Motor neuron (in vitro differentiated cells): ENCODE measurements at regions of chr20 and their contacts with region 1.

Region 1: GRCh38 chr20:48620519-48621254 is 207.1 kb downstream of the PREX1 start:
- ATAC-seq: peak; percentile 80 to 96 (median 94)
- H3K4me3 ChIP-seq: peak overlapping the region in 3 of 5 donors; percentile 1 to 8 (median 8)
- H3K27ac ChIP-seq: no peak overlapping the region
- H3K4me1 ChIP-seq: peaks cover 4 to 9% of the 10 kb centered on the region in 2 donors

Region 2: GRCh38 chr20:47672166-47672565 is 948.5 kb before region 1 on chr20:
- in situ Hi-C with region 1: loop called in 8 of 9 experiments (anchors 5 to 25 kb)
- ATAC-seq: no peak
- H3K4me3 ChIP-seq: no peak overlapping the region
- H3K27ac ChIP-seq: no peak overlapping the region
- H3K4me1 ChIP-seq: no peaks in the 10 kb centered on the region

Region 3: GRCh38 chr20:47785854-47786764 is 834.6 kb before region 1 on chr20:
- in situ Hi-C with region 1: loop called in 7 of 9 experiments (anchors 10 to 25 kb)
- ATAC-seq: peak; percentile 48 to 79 (median 74)
- H3K4me3 ChIP-seq: peak overlapping the region; percentile 45 to 84 (median 56)
- H3K27ac ChIP-seq: peak overlapping the region; percentile 90
- H3K4me1 ChIP-seq: peaks cover 39 to 48% of the 10 kb centered on the region in 2 donors

Region 4: GRCh38 chr20:48012197-48013085 is 608.2 kb before region 1 on chr20:
- in situ Hi-C with region 1: no loop called
- ATAC-seq: peak in 3 of 8 experiments; percentile 23 to 47 (median 46)
- H3K4me3 ChIP-seq: no peak overlapping the region
- H3K27ac ChIP-seq: no peak overlapping the region
- H3K4me1 ChIP-seq: no peaks in the 10 kb centered on the region

Region 5: DNA sequence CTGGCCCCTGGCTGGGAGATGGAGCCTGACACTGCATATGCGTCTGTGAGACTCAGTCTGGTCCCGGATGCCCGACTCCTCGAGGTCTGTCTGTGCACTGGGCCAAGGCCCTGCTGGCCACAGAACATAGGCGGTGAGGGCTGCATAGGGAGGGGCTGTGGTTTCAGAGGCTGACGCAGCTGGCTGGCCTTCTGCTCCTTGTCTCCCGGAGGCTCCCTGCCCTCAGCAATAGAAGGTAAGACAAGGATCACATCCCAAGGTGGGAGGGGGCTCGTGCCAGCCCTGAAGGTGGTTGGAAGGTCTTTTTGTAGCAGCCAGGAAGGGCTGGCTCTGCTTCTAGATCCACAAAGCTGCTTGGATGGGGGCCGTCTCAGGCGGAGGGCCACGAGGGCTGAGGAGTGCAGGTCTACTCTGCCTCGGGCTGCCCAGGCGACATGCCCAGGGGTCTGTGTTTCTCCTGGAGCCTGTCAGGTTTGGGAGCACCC is 595.6 kb before region 1 on chr20:
- in situ Hi-C with region 1: loop called in 1 of 9 experiments (anchors 25 kb)
- ATAC-seq: peak; percentile 86 to 99 (median 92)
- H3K4me3 ChIP-seq: no peak overlapping the region
- H3K27ac ChIP-seq: peak overlapping the region in 1 of 2 donors; percentile 38
- H3K4me1 ChIP-seq: peaks cover 17 to 21% of the 10 kb centered on the region in 2 donors

Region 6: DNA sequence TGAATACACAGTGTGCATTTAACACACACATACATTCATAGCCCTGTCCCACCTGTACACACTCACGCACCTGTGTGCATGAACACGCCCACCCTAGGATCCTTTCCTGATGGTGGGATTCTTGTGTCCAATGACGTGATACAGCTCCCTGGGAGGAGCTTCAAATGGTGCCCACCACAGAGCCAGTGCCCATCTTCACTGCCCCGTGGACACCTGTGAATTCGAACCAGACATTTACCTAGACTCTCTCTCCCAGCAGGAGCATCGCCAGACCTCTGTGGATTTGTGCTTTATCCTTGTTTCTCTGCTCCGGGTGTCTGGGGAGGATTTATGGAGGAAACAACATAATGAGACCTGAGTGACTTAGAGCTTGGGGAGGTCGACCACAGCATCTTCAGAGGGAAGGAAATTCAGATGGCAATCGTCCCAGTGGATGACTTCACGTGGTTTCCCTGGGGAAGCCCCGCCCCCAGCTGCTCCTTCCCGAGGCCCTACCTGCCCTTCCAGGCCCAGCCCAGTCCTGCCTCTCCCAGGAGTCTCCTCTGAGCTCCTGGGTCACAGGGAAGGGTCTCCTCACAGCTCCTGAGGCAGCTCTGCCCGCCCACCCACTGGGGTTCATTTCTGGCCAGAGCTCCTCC is 405.3 kb before region 1 on chr20:
- in situ Hi-C with region 1: loop called in 1 of 9 experiments (anchors 25 kb)
- ATAC-seq: peak in 5 of 8 experiments; percentile 20 to 54 (median 43)
- H3K4me3 ChIP-seq: no peak overlapping the region
- H3K27ac ChIP-seq: no peak overlapping the region
- H3K4me1 ChIP-seq: peaks cover 32 to 35% of the 10 kb centered on the region in 2 donors